ENCODE measurements at regions of chr22 and their contacts with region 1.

Region 1: GRCh38 chr22:41697126-41697775 is 2.1 kb upstream of the MEI1 start:
- DNase-seq: peak; percentile 80 to 91 (median 85)
- H3K4me3 ChIP-seq: peak overlapping the region in 2 of 3 experiments; percentile 10 to 64
- H3K4me3 Mint-ChIP-seq: peak overlapping the region; percentile 76 to 88
- H3K27ac ChIP-seq: peak overlapping the region; percentile 25 to 64
- H3K27ac Mint-ChIP-seq: peak overlapping the region in 5 of 7 donors; percentile 84 to 94 (median 88)
- H3K4me1 ChIP-seq: peaks cover 17 to 21% of the 10 kb centered on the region in 2 donors
- H3K4me1 Mint-ChIP-seq: peaks cover 14% of the 10 kb centered on the region
- H3K27me3 ChIP-seq: no peaks in the 10 kb centered on the region
- H3K27me3 Mint-ChIP-seq: peaks cover 2 to 4% (median 2%) of the 10 kb centered on the region in 3 donors
- CTCF ChIP-seq: peak; percentile 98

Region 2: GRCh38 chr22:41732096-41732772 is 35.0 kb after region 1 on chr22:
- intact Hi-C with region 1: no loop called
- DNase-seq: no peak
- H3K4me3 ChIP-seq: no peak overlapping the region
- H3K4me3 Mint-ChIP-seq: no peak overlapping the region
- H3K27ac ChIP-seq: no peak overlapping the region
- H3K27ac Mint-ChIP-seq: peak overlapping the region in 1 of 7 donors; percentile 43
- H3K4me1 ChIP-seq: no peaks in the 10 kb centered on the region
- H3K4me1 Mint-ChIP-seq: no peaks in the 10 kb centered on the region
- H3K27me3 ChIP-seq: no peaks in the 10 kb centered on the region
- H3K27me3 Mint-ChIP-seq: peaks cover 0 to 6% (median 1%) of the 10 kb centered on the region in 3 donors
- CTCF ChIP-seq: no peak

Region 3: DNA sequence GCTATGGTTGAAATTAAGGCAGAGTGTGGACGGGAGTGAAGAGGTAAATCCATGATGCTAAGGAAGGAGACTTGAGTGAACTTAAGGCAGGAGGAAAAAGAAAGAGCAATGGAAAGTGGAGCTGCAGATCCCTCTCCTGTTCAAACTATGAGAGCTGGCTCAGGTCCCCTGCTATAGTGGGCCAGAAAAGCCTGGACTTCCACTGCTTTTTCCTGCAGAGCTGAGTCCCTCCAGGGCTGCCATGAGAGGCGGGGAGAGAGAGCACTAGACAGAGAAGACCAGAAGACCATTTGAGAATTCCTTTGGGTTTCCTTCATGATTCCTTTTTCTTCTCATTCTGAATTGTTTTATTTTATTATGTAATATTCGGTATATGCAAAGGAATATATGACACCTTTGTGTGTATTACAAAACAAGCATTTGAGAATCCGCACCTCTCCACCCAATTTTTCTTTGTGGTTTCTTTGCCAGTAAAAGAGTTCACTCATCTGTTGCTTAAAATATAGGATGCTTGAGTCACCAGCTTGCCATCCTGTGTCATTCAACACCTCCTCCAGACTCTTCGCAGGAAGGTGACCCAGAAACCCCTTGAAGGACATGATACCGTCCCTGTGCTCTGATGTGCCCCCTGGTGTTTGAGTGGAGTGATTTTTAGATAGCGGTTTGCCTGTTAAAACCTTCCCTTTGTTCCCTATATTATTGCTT is 160.1 kb after region 1 on chr22:
- intact Hi-C with region 1: loop called (anchors 5 to 10 kb)
- DNase-seq: peak; percentile 54 to 78 (median 61)
- H3K4me3 ChIP-seq: no peak overlapping the region
- H3K4me3 Mint-ChIP-seq: no peak overlapping the region
- H3K27ac ChIP-seq: no peak overlapping the region
- H3K27ac Mint-ChIP-seq: peak overlapping the region in 5 of 7 donors; percentile 52 to 84 (median 82)
- H3K4me1 ChIP-seq: peaks cover 3 to 28% of the 10 kb centered on the region in 2 donors
- H3K4me1 Mint-ChIP-seq: peaks cover 29% of the 10 kb centered on the region
- H3K27me3 ChIP-seq: no peaks in the 10 kb centered on the region
- H3K27me3 Mint-ChIP-seq: peaks cover 0 to 1% (median 0%) of the 10 kb centered on the region in 3 donors
- CTCF ChIP-seq: peak; percentile 77

Region 4: DNA sequence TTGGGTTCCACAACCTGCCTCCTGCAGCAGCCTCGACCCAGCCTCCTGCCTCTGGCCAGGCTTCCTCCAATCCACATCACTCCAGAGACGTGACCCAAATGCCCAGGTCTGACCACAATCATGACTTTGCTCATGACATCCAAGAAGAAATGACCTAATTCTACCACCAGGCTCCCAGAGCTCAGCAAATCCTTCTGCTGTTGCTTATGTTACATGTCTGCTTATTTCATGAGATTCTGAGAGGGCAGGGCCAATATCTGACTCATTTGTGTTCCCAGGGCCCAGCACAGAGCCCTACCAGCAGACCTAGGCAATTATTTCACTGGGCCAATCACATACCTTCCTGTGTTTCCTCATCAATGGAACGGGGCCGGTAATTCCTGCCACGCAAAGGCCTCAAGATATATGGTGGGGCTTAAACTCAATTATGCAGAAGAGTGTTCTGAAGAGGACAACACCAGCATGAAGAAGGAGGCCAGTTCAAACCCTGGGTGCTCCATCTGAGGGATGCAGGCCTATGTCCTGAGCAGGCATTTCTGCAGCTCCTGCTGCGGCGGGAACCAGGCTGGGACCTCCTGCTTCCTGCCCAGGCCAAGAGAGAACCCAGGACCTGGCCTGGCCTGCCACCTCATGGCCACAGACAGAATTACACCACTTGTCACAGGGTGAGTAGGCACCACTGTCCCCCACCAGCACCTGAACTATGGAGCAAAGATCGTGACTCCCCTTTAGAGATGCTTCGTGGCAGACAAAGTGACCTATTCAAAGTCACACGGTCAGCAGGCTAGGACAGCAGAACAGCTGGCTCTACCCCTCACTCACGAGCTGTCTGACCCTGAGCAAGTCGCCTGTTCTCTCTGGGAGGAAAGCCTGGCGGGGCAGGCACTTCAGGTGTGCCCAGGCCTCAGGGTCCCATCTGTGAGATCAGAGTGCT is 243.8 kb after region 1 on chr22:
- intact Hi-C with region 1: loop called (anchors 1 to 2 kb)
- DNase-seq: peak; percentile 70 to 78 (median 72)
- H3K4me3 ChIP-seq: no peak overlapping the region
- H3K4me3 Mint-ChIP-seq: peak overlapping the region in 1 of 2 donors; percentile 42
- H3K27ac ChIP-seq: no peak overlapping the region
- H3K27ac Mint-ChIP-seq: peak overlapping the region; percentile 17 to 91 (median 76)
- H3K4me1 ChIP-seq: peaks cover 18 to 24% of the 10 kb centered on the region in 2 donors
- H3K4me1 Mint-ChIP-seq: peaks cover 32% of the 10 kb centered on the region
- H3K27me3 ChIP-seq: no peaks in the 10 kb centered on the region
- H3K27me3 Mint-ChIP-seq: peaks cover 0 to 5% (median 0%) of the 10 kb centered on the region in 3 donors
- CTCF ChIP-seq: peak; percentile 96

Region 5: GRCh38 chr22:42090596-42091454 is 393.6 kb after region 1 on chr22 and contains the start of gene NDUFA6:
- intact Hi-C with region 1: loop called in 1 of 2 experiments (anchors 10 kb)
- DNase-seq: peak; percentile 99 to 100 (median 99)
- H3K4me3 ChIP-seq: peak within 1 kb of the TSS; percentile 68 to 90 (median 74)
- H3K4me3 Mint-ChIP-seq: peak within 1 kb of the TSS; percentile 94 to 97
- H3K27ac ChIP-seq: peak within 1 kb of the TSS; percentile 94 to 98
- H3K27ac Mint-ChIP-seq: peak within 1 kb of the TSS; percentile 97 to 99 (median 99)
- H3K4me1 ChIP-seq: peaks cover 15 to 24% of the 10 kb centered on the region in 2 donors
- H3K4me1 Mint-ChIP-seq: peaks cover 21% of the 10 kb centered on the region
- H3K27me3 ChIP-seq: no peaks in the 10 kb centered on the region
- H3K27me3 Mint-ChIP-seq: peaks cover 0 to 1% (median 0%) of the 10 kb centered on the region in 3 donors
- CTCF ChIP-seq: peak; percentile 87
- polyA plus RNA-seq, gene NDUFA6: 42.9 to 167 (median 138) TPM